Activated B cell treated with CpG ODN at 0.5 μM for 24 hours (primary cell): ENCODE measurements at regions of chr5 and their contacts with region 1.

Region 1: DNA sequence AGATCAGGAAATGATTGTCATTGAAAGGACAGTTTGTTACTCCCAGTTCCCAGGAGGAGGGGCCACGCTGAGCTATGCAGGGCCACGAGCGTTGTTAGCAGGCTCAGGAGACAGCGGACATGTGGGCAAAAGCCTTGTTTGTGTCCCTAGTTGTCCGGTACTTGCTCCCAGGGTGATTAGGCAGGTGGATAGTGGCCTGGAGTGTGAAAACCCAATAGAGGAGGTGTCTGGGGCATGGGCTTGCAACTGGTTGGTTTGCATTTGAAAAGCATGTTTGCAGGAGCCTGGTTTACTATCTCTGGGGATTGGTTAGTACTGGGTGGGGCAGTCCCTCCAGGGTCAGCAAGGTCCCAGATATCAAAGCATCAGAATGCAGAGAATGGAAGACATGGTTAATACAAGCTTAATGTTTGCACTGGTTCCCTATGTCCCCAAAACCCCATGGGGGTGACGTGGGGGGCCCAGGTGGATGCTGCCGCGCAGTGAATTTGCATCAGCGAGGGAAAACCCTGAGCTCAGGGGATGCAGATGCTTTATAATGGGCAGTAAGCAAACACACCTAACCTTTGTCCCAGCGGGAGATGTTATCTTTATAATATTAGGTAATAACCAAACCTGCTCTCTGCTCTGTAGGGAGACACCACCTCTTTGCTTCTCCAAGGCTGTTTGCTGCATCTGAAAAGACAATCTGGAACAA is 39.7 kb downstream of the ROPN1L start:
- DNase-seq: no peak
- ATAC-seq: peak; percentile 80
- H3K4me3 Mint-ChIP-seq: no peak overlapping the region
- H3K27ac Mint-ChIP-seq: no peak overlapping the region
- H3K4me1 Mint-ChIP-seq: peaks cover 24% of the 10 kb centered on the region
- H3K27me3 Mint-ChIP-seq: peaks cover 1% of the 10 kb centered on the region
- CTCF ChIP-seq: no peak

Region 2: GRCh38 chr5:10518347-10518746 is 37.0 kb after region 1 on chr5:
- CTCF ChIA-PET with region 1: no interaction called
- POLR2A ChIA-PET with region 1: no interaction called
- intact Hi-C with region 1: loop called (anchors 5 kb)
- DNase-seq: no peak
- ATAC-seq: no peak
- H3K4me3 Mint-ChIP-seq: no peak overlapping the region
- H3K27ac Mint-ChIP-seq: no peak overlapping the region
- H3K4me1 Mint-ChIP-seq: peaks cover 6% of the 10 kb centered on the region
- H3K27me3 Mint-ChIP-seq: peaks cover 2% of the 10 kb centered on the region
- CTCF ChIP-seq: no peak